ENCODE measurements at regions of chr3 and their contacts with region 1.

Region 1: GRCh38 chr3:57199895-57200297 is at the start of gene HESX1:
- DNase-seq: no peak
- H3K4me3 ChIP-seq: no peak within 1 kb of the TSS
- H3K4me3 Mint-ChIP-seq: no peak within 1 kb of the TSS
- H3K27ac Mint-ChIP-seq: no peak within 1 kb of the TSS
- H3K4me1 ChIP-seq: peaks cover 10% of the 10 kb centered on the region
- H3K4me1 Mint-ChIP-seq: peaks cover 7% of the 10 kb centered on the region
- H3K27me3 ChIP-seq: no peaks in the 10 kb centered on the region
- H3K27me3 Mint-ChIP-seq: no peaks in the 10 kb centered on the region
- CTCF ChIP-seq: no peak
- total RNA-seq, gene HESX1: 1.2 and 1.5 TPM in 2 replicates

Region 2: GRCh38 chr3:57179580-57180410 is 20.1 kb before region 1 on chr3:
- CTCF ChIA-PET with region 1: interaction called, 18 read pairs
- POLR2A ChIA-PET with region 1: no interaction called
- intact Hi-C with region 1: no loop called
- DNase-seq: peak in 1 of 2 experiments; percentile 36
- H3K4me3 ChIP-seq: no peak overlapping the region
- H3K4me3 Mint-ChIP-seq: no peak overlapping the region
- H3K27ac Mint-ChIP-seq: no peak overlapping the region
- H3K4me1 ChIP-seq: no peaks in the 10 kb centered on the region
- H3K4me1 Mint-ChIP-seq: no peaks in the 10 kb centered on the region
- H3K27me3 ChIP-seq: no peaks in the 10 kb centered on the region
- H3K27me3 Mint-ChIP-seq: peaks cover 3% of the 10 kb centered on the region
- CTCF ChIP-seq: peak; percentile 50 to 55

Region 3: DNA sequence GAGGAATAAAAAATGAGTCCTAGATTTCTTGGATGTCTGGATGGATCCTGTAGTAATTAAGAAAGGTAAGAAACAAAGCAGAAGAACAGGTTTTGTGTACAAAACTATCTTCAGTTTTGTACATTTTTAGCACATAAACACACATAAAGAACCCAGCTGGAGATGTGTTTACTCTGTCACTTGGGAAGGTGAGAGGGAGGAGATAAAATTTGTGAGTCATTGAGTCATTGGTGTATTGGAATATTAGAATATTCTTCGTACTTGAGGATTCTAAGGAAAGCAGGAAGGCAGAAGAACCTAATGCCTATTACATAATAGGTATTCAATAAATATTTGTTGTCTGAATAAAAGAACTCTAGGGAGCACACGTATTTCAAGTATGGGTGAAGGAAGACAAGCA is 45.0 kb after region 1 on chr3:
- CTCF ChIA-PET with region 1: no interaction called
- POLR2A ChIA-PET with region 1: no interaction called
- intact Hi-C with region 1: no loop called
- DNase-seq: no peak
- H3K4me3 ChIP-seq: no peak overlapping the region
- H3K4me3 Mint-ChIP-seq: no peak overlapping the region
- H3K27ac Mint-ChIP-seq: no peak overlapping the region
- H3K4me1 ChIP-seq: peaks cover 12% of the 10 kb centered on the region
- H3K4me1 Mint-ChIP-seq: peaks cover 15% of the 10 kb centered on the region
- H3K27me3 ChIP-seq: no peaks in the 10 kb centered on the region
- H3K27me3 Mint-ChIP-seq: no peaks in the 10 kb centered on the region
- CTCF ChIP-seq: no peak

Region 4: DNA sequence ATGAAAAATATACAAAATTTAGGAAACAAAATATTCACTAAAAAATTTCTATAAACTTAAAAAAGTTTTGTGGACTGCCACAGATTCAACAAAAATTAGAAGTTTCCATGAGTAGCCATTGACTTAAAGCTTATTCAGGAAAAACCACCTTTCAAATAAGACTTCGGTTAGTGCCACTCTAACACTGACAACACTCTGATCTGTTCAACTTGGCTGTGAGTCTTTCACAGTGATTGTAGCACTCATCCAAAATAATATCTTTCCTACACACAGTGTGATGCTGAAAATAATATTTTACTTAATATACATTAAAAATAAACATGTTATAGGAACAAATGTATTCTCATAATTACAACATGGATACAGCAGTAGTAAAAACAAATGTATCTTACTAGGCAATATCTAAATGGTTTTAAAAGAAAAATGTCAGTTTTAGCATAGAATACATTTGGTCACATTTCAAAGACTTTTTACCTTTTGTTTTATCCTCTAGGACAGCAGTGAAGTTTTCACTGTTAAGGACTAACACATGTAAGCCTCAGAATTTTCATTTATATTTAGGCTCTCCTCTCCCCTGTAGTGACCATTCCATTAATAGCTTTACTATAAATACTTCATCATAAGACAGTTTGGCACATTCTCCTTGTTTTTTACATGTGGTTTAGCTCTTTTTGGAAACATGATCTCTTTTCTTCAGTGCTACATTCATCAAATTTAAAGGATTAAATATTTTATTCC is 92.4 kb after region 1 on chr3 and contains the start of gene ASB14:
- CTCF ChIA-PET with region 1: no interaction called
- POLR2A ChIA-PET with region 1: no interaction called
- intact Hi-C with region 1: no loop called
- DNase-seq: no peak
- H3K4me3 ChIP-seq: no peak within 1 kb of the TSS
- H3K4me3 Mint-ChIP-seq: no peak within 1 kb of the TSS
- H3K27ac Mint-ChIP-seq: no peak within 1 kb of the TSS
- H3K4me1 ChIP-seq: no peaks in the 10 kb centered on the region
- H3K4me1 Mint-ChIP-seq: no peaks in the 10 kb centered on the region
- H3K27me3 ChIP-seq: no peaks in the 10 kb centered on the region
- H3K27me3 Mint-ChIP-seq: no peaks in the 10 kb centered on the region
- CTCF ChIP-seq: no peak
- total RNA-seq, gene ASB14: not detected in 2 replicates

Measured in Caco-2 (cell line).